ENCODE measurements at regions of chr1 and their contacts with region 1.

Region 1: GRCh38 chr1:26874896-26875295 is 11.9 kb downstream of the SFN start:
- DNase-seq: no peak
- ATAC-seq: no peak
- H3K4me3 ChIP-seq: no peak overlapping the region
- H3K27ac ChIP-seq: no peak overlapping the region
- H3K4me1 ChIP-seq: peaks cover 0 to 7% (median 0%) of the 10 kb centered on the region in 12 donors
- H3K27me3 ChIP-seq: no peaks in the 10 kb centered on the region
- CTCF ChIP-seq: no peak
- POLR2A ChIP-seq: no peak

Region 2: DNA sequence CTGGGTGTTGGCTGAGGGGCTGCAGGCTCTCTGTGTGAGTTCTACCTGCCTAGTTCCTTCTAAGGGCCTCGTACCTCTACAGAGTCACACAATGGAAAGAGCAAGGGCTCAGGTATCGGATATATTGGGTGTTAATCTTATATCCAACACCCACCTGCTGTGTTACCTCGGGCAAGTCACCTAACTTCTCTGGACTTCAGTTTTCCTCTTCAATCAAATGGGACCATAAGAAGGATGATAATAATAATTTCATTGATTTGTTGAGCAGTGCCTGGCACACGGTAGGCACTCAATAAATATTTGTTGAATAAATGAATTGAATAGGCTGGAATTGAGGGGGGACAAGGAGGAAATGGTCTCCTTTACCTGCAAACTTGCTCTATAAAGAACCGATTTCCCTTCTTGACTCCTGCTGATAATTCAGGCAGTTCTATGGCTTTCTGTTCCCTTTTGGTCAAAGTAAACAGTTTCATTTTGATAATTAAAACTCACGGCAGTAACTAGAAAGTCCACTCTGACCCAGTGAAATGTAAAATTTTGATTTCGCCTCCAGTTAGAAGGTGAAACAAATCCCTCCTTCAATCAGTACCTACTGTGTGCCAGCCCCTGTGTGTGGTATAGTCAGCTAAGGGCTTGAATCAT is 1274.8 kb before region 1 on chr1:
- intact Hi-C with region 1: no loop called
- DNase-seq: no peak
- ATAC-seq: no peak
- H3K4me3 ChIP-seq: no peak overlapping the region
- H3K27ac ChIP-seq: no peak overlapping the region
- H3K4me1 ChIP-seq: no peaks in the 10 kb centered on the region
- H3K27me3 ChIP-seq: no peaks in the 10 kb centered on the region
- CTCF ChIP-seq: no peak
- POLR2A ChIP-seq: no peak

Region 3: GRCh38 chr1:26602378-26602959 is 272.4 kb before region 1 on chr1:
- intact Hi-C with region 1: loop called (anchors 2 to 10 kb)
- DNase-seq: peak in 2 of 5 donors; percentile 35 to 36
- ATAC-seq: peak in 2 of 4 donors; percentile 28 to 42
- H3K4me3 ChIP-seq: no peak overlapping the region
- H3K27ac ChIP-seq: no peak overlapping the region
- H3K4me1 ChIP-seq: peaks cover 0 to 23% (median 0%) of the 10 kb centered on the region in 12 donors
- H3K27me3 ChIP-seq: no peaks in the 10 kb centered on the region
- CTCF ChIP-seq: peak; percentile 79 to 95 (median 90)
- POLR2A ChIP-seq: no peak

Region 4: DNA sequence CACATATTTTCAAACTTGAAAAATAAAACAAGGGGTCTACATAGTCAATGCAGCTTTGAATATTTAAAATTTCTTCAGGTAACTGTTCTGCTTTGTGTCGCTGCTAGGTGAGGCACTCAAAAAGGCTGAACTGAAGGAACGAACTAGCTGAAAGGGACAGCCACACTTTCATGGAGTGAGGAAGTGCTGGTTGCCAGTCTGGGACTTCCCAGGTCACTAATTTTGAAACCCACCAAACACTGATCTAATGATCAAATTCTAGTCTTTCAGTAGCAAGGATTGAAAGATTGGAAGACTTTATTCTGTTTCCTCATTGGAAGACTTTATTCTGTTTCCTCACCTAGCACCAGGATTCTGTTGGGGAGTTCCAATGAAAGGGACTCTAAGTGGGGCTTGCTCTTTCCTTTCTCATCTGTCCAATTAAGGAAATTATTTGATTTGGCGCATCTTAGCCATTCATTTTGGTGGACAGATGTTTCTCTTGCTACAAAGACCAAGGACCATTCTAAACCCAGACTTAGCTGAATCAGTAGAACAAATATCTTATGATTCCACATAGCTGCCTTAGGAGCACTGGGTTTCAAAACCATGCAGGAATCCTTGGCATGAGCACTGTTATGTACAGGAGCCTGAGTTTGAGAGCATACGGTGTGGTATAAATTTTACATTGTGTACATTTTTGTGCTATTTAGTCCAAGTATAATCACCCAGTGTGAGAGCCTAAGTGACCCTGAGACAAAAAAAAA is 190.0 kb before region 1 on chr1:
- intact Hi-C with region 1: loop called in 1 of 10 experiments (anchors 5 kb)
- DNase-seq: no peak
- ATAC-seq: no peak
- H3K4me3 ChIP-seq: no peak overlapping the region
- H3K27ac ChIP-seq: no peak overlapping the region
- H3K4me1 ChIP-seq: peaks cover 0 to 13% (median 0%) of the 10 kb centered on the region in 12 donors
- H3K27me3 ChIP-seq: no peaks in the 10 kb centered on the region
- CTCF ChIP-seq: no peak
- POLR2A ChIP-seq: no peak

Region 5: DNA sequence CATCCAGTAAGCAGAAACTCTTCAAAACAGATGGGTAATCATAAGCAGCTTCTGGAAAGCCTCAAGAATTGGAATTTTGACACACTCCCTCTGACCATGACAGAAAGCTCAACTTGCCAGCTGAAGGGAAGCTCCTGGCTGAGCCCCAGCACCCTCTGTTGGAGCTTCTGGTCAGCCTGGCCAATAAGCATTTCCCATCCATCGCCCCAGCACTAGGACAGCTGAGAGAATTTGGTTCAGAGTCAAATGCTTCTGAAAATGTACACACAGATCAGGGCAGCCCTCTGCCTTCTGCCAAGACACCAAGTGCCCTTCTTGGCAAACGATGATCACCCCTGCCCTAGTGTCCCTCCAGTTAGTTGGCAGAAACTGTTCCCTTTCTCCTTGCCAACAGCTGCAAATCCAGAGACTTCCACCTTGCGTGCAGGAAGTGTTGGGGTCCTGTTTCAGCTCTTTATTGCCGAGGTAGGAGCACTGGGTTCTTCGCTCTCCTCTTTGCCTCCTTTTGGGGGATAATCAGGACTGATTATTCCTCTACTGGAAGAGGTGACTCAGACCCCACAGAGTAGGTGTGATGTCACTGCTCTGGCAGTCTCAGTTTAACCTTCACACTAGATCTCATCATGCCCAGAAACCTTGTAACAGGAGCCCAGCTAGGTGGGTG is 75.3 kb before region 1 on chr1:
- intact Hi-C with region 1: no loop called
- DNase-seq: peak; percentile 69 to 89 (median 79)
- ATAC-seq: peak; percentile 89 to 95 (median 92)
- H3K4me3 ChIP-seq: peak overlapping the region in 5 of 12 donors; percentile 0 to 17 (median 9)
- H3K27ac ChIP-seq: peak overlapping the region; percentile 76 to 93 (median 84)
- H3K4me1 ChIP-seq: peaks cover 0 to 58% (median 48%) of the 10 kb centered on the region in 12 donors
- H3K27me3 ChIP-seq: no peaks in the 10 kb centered on the region
- CTCF ChIP-seq: no peak
- POLR2A ChIP-seq: no peak

Region 6: GRCh38 chr1:26811057-26811456 is 63.8 kb before region 1 on chr1:
- intact Hi-C with region 1: loop called in 9 of 10 experiments (anchors 5 kb)
- DNase-seq: no peak
- ATAC-seq: no peak
- H3K4me3 ChIP-seq: no peak overlapping the region
- H3K27ac ChIP-seq: no peak overlapping the region
- H3K4me1 ChIP-seq: peaks cover 0 to 18% (median 0%) of the 10 kb centered on the region in 12 donors
- H3K27me3 ChIP-seq: no peaks in the 10 kb centered on the region
- CTCF ChIP-seq: no peak
- POLR2A ChIP-seq: no peak

Region 7: DNA sequence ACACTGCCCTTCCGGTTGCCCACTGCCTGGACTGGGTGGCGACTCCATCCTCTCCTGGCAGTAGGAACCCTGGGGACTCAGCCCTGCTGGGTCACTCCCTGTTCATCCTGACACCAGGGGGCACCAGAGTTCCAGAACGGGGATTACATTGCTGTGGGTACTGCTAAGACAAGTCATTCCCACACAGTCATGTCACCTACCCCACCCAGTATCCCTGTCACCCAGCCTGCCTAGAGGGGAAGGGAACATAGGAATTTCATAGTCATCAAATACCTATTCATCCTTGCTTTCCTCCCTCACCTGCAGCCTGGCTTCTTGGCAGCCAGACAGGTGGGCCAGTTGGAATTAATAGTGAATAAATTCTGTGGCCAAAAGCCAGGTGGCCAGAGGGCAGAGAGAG is 21.7 kb before region 1 on chr1:
- intact Hi-C with region 1: loop called in 8 of 10 experiments (anchors 1 to 2 kb)
- DNase-seq: peak; percentile 81 to 89 (median 86)
- ATAC-seq: peak; percentile 77 to 91 (median 89)
- H3K4me3 ChIP-seq: no peak overlapping the region
- H3K27ac ChIP-seq: no peak overlapping the region
- H3K4me1 ChIP-seq: peaks cover 0 to 6% (median 0%) of the 10 kb centered on the region in 12 donors
- H3K27me3 ChIP-seq: no peaks in the 10 kb centered on the region
- CTCF ChIP-seq: peak; percentile 64 to 85 (median 78)
- POLR2A ChIP-seq: no peak

Measured in heart left ventricle (tissue), 16 donors.